ENCODE measurements at regions of chr10 and their contacts with region 1.

Region 1: DNA sequence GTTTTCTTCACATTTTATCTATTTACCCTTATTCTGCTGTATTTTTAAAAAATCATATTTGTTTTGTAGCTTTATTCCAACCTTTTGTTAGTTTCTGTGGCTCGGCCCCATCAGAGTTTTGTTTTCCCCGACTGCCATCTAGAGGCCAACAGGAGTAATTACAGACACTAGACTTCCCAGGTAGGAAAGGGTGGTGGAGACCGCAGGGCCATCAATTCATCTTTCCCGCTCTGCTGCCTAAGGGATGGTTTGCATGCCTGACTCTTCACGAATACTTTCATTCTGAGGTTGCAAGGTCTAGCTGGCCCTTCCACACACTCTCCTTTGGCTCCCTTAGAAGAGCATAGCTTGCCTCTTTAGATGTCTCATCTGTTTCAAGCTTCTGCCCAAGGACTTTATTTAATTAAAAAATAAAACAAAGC is 38.3 kb downstream of the LYZL2 start:
- DNase-seq: peak; percentile 63 to 81 (median 74)
- H3K4me3 ChIP-seq: no peak overlapping the region
- H3K27ac ChIP-seq: no peak overlapping the region
- H3K4me1 ChIP-seq: peaks cover 6 to 26% (median 19%) of the 10 kb centered on the region in 4 experiments
- H3K27me3 ChIP-seq: no peaks in the 10 kb centered on the region

Region 2: DNA sequence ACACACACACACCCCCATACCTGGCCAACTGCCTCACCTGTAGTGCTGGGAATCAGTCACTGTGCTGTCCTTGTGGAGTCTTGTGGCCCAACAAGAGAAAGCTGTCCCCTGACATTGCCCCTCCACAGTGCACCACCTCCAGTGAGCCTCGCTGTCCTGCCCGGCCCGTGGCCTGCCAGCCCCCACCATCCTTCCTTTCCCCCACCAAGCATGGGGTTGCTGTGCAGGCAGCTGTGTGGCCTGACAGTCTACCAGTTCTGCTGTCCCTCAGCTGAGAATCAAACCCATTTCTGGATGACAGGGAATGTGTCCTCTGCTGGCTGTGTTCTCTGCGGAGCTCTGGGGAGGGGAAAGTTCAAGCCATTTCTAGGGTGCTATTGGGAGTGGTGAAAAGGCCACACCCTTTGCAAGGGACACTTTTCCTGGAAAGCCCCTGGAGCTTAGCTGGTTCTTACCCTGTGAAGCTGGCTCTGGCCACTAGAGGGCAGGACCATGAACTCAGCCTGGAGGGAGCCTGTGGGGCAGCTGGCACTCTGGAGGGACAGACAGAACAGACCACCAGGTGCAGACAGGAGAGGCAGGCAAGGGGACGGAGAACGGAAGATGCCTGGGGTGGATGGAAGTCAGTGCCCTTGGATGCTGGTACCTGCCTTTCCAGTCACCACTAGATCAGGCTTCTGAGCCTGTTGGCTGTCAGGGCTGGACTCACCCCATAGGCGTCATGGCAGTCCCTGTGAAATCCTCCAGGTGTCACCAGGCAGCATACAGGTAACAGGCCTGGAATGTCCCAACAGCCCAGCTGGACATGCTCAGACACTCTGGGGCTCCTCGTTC is 231.7 kb before region 1 on chr10:
- CTCF ChIA-PET with region 1: interaction called, 43 read pairs
- POLR2A ChIA-PET with region 1: no interaction called
- DNase-seq: peak; percentile 62 to 72 (median 64)
- H3K4me3 ChIP-seq: no peak overlapping the region
- H3K27ac ChIP-seq: no peak overlapping the region
- H3K4me1 ChIP-seq: no peaks in the 10 kb centered on the region
- H3K27me3 ChIP-seq: no peaks in the 10 kb centered on the region

Region 3: DNA sequence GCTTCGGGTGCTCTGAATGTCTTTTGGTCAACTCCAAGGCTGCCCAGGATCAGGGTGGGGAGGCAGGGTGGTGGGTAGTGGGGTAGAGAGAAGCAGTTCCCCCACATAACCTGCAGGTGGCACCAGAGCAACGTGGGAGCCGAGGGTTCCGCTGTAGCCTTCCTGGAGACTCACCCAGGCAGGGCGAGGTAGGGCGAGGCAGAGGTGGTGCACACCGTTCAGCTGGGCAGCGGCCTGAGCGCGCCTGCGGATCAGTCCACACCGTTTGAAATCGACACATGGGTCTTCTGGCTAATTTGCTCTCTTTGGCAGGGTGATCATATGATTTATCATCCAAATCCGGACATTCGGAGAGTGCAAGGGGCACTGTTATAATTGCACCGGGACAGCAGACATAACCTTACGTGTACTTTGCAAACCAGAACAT is 198.7 kb before region 1 on chr10:
- CTCF ChIA-PET with region 1: interaction called, 77 read pairs
- POLR2A ChIA-PET with region 1: interaction called, 4 read pairs
- DNase-seq: peak; percentile 59 to 76 (median 72)
- H3K4me3 ChIP-seq: peak overlapping the region in 4 of 7 experiments; percentile 32 to 75 (median 59)
- H3K27ac ChIP-seq: no peak overlapping the region
- H3K4me1 ChIP-seq: peaks cover 0 to 7% (median 4%) of the 10 kb centered on the region in 4 experiments
- H3K27me3 ChIP-seq: no peaks in the 10 kb centered on the region

Region 4: DNA sequence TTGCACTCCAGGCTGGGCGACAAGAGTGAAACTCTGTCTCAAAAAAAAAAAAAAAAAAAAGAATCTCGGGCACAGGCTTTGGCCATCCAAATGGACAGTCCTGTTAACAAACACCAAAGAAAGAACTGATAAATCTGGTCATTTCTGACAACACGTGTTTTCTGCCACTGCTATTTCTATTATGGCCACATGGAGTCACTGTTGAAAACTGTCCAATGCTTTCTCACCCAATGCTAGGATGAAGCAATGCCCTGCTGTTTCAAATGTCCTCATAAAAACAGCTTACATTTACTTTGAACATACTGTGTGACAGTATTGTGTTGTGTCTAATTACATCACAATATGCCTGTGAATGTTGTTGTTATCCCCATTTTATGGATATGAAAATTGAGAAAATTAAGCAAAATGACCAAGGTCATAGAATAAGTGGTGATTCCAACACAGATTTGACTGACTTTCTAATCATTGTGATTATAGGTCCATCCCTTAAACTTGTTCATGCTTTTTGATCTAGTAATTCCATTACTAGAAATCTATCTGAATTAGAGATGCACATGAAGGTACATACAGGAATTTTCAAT is 177.2 kb before region 1 on chr10:
- CTCF ChIA-PET with region 1: interaction called, 15 read pairs
- POLR2A ChIA-PET with region 1: no interaction called
- DNase-seq: peak; percentile 59 to 82 (median 79)
- H3K4me3 ChIP-seq: no peak overlapping the region
- H3K27ac ChIP-seq: no peak overlapping the region
- H3K4me1 ChIP-seq: peaks cover 5 to 24% (median 14%) of the 10 kb centered on the region in 4 experiments
- H3K27me3 ChIP-seq: no peaks in the 10 kb centered on the region

Region 5: DNA sequence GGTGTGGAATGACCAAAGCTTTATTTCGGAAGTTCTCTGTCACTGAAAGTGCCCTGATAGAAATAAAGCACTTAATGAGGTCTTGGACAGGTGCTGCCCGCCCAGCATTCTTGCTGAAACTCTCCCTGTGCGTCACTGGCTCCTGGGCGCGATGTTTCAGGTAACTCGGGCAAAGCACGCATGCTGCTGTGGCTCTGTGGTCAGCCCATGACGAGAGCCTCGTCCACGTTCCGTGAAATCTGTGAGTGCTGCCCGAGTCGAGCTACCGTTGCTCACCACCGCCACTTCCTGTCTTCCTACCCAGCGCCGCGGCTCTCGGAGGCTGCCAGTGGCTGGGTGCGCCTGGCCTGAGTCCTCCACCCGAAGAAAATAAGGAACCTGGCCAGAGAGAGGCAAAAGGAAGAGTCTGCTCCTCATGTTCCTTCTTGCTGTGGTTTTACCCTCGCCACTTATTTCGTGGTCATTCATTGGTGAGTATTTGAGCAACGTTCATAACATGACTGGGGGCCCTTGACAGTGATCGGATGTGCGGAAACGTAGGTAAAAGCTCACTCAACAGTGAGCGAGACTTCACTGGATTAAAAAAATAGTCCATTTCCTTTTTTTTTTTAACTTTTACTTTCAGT is 61.8 kb before region 1 on chr10:
- CTCF ChIA-PET with region 1: interaction called, 18 read pairs
- POLR2A ChIA-PET with region 1: no interaction called
- DNase-seq: peak; percentile 90 to 99 (median 97)
- H3K4me3 ChIP-seq: peak overlapping the region in 6 of 7 experiments; percentile 33 to 64 (median 52)
- H3K27ac ChIP-seq: peak overlapping the region; percentile 50 to 79
- H3K4me1 ChIP-seq: peaks cover 12 to 84% (median 45%) of the 10 kb centered on the region in 4 experiments
- H3K27me3 ChIP-seq: no peaks in the 10 kb centered on the region

Region 6: DNA sequence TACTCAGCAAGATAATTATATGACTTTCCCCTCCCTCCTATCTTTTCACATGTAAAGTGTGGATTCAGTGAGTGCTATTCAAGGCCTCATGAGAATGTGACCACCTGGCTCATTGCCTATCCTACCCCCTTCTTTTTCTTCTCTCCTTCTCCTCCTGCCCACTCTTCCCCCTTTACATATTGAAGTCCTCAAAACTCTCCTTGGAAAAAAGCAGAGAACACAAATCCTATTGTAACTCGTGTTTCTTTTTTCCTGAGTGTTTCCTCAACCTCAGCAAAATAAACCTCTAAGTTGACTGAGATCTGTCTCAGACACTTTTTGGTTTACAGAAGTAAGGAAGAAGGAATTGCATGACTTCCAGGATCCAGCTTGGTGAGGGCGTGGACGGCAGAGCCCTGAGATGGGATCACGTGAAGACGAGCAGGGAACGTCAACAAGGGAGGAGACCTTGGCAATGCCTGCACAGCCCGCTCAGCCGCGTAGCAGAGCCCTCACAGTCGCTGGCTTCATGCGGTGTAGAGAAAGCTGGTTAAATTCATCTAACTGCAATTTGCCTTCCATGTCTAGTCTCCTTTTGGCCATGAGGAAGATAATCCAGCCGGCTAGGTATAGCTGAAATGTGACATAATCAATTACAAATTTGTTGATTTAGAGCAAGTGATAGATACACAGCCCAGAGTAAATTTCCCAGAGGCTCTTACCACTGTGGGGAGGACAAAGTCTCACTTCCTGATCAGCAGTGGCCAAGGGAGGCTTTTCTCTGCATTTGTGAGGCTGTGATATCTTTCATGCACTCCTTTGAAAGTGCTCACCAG is 37.4 kb before region 1 on chr10:
- CTCF ChIA-PET with region 1: interaction called, 18 read pairs
- POLR2A ChIA-PET with region 1: no interaction called
- DNase-seq: peak in 2 of 3 donors; percentile 35 to 40
- H3K4me3 ChIP-seq: peak overlapping the region in 3 of 7 experiments; percentile 30 to 63 (median 48)
- H3K27ac ChIP-seq: peak overlapping the region in 1 of 2 experiments; percentile 73
- H3K4me1 ChIP-seq: peaks cover 13 to 40% (median 24%) of the 10 kb centered on the region in 4 experiments
- H3K27me3 ChIP-seq: no peaks in the 10 kb centered on the region

Region 7: DNA sequence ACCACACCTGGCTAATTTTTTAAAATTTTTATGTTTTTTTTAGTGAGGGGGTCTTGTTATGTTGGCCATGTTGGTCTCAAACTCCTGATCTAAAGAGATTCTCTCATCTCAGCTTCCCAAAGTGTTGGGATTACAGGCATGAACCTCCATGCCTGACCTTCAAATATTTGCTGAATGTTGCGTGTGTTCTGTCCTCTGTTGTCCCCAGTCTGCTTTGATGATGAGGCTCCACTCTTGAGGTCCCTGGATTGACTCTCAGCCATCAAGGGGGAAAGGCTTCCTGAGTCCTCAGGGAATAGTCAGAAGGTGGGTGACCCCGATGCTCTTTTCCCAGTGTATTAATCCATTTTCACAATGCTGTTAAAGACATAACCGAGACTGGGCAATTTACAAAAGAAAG is 12.3 kb after region 1 on chr10:
- CTCF ChIA-PET with region 1: interaction called, 24 read pairs
- POLR2A ChIA-PET with region 1: no interaction called
- DNase-seq: no peak
- H3K4me3 ChIP-seq: no peak overlapping the region
- H3K27ac ChIP-seq: no peak overlapping the region
- H3K4me1 ChIP-seq: peaks cover 0 to 21% (median 7%) of the 10 kb centered on the region in 4 experiments
- H3K27me3 ChIP-seq: no peaks in the 10 kb centered on the region

Measured in common myeloid progenitor, CD34-positive (primary cell).